Uterus (tissue), 4 donors: ENCODE measurements at regions of chr2 and their contacts with region 1.

Region 1: DNA sequence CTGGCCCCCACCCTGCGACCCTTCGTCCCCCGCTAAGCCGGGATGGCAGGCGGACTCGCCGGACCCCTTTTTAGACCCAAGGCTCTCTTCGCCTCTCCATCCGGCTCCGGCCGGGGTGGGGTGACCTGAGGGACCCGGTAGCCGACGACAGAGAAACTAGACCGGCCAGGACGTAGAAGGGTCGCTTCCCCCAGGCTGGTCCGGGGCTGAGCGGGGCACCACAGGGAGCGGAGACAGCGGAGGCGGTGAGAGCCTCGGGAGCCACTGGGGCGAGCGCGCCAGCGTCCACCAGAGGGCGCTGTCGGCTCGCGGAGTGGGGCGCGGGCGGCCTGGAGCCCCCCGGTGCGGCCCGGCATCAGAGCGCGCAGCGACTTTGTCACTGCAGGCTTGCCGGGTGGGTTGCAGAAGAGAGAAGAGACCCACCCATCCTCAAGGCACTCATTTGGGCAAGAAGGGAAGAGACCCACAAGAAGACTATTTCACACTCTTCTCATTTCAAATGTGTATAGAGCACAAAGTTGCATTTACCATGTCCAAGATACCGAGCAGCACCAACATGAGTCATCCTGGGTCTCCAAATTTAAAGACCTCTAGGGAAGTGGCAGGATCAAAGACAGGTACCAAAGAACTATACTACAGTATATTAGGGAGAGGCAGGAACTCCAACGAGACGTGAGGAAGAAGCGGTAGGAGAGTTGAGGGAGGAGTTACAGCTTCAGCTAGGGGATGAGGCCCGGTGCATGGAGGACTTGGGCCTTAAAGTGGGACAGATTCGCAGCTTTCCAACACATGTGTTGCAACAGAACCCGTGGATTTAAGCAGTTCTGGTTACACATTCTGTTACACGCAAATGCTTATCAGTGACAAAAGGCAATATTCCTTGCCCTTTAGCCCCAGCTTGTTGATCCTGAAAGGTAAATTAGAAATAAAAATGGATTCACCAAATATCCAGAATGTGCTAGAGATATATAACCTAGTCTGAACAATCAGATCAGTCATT is 7.6 kb upstream of the PRKCE start:
- DNase-seq: peak; percentile 44 to 74
- H3K4me3 ChIP-seq: peak overlapping the region; percentile 30 to 33
- H3K27ac ChIP-seq: peak overlapping the region in 1 of 2 donors; percentile 34
- H3K4me1 ChIP-seq: no peaks in the 10 kb centered on the region
- H3K27me3 ChIP-seq: no peaks in the 10 kb centered on the region
- CTCF ChIP-seq: peak; percentile 75 to 99 (median 98)
- POLR2A ChIP-seq: peak in 1 of 2 donors; percentile 34

Region 2: DNA sequence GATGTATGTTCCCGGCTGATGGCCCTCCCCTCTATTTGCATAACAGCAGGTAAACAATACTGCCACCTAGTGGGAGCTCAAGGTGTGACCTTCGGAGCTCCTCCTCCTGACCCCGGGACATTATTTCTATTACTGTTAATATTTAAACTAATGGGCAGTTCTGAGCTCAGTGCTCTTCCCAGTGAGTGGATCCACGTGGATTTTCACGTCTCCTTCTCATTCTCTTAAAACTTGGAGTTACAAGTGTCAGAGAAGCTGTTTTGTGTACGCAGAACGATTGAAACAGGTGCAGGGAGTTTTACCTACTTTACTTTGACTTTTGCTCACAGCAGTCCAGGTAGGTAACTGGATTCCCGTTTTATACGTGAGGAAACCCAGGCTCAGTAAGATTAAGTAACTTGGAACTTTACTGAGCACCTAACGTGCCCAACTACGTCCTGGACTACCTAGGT is 134.9 kb after region 1 on chr2:
- intact Hi-C with region 1: loop called (anchors 5 kb)
- DNase-seq: peak; percentile 59 to 76
- H3K4me3 ChIP-seq: no peak overlapping the region
- H3K27ac ChIP-seq: no peak overlapping the region
- H3K4me1 ChIP-seq: no peaks in the 10 kb centered on the region
- H3K27me3 ChIP-seq: no peaks in the 10 kb centered on the region
- CTCF ChIP-seq: peak; percentile 68 to 81 (median 78)
- POLR2A ChIP-seq: no peak

Region 3: DNA sequence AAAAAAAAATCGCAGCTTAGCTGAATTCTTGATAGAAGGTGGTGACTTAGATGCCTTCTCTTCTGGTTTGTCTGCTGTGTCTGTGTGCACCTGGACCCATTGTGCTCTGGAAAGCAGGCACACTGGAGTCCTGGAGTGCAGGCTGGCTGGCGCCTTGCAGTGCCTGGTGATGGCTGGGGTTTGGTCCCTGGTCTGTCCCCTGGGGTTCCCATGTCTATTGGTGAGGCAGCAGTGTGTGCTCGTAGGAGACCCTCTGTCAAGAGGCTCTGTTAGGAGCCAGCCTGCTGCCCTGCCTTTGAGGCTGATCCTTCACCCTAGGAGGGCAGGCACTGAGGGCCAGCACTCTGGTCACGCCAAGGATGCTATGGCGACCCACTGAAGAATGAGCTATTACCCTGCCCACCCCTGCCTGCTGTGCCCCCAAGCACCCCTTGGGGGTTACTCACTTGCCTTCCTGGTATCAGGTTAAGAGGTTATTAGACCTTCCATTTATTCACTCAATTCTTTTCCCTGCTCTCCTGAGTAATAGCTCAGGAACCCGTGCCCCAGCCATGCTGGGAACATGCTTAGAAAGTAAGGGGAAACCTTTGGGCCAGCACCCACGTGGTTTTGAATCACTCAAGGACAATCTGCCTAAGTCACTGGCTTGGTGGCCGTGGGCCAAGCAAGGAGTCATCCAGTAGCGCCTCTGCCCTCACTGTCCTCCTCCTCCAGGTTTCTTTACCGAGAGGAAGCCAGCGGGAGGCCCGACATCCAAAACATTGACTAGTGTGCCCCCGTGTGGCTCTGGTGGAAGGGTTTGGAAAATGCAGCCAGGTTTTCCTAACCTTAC is 292.2 kb after region 1 on chr2:
- intact Hi-C with region 1: loop called (anchors 5 kb)
- DNase-seq: peak; percentile 94 to 95
- H3K4me3 ChIP-seq: no peak overlapping the region
- H3K27ac ChIP-seq: peak overlapping the region; percentile 49 to 55
- H3K4me1 ChIP-seq: no peaks in the 10 kb centered on the region
- H3K27me3 ChIP-seq: no peaks in the 10 kb centered on the region
- CTCF ChIP-seq: peak; percentile 78 to 93 (median 88)
- POLR2A ChIP-seq: no peak